IMR-90 (cell line): ENCODE measurements at regions of chr6 and their contacts with region 1.

Region 1: GRCh38 chr6:31597006-31597405 is 4.2 kb upstream of the NCR3 start:
- DNase-seq: peak; percentile 31
- ATAC-seq: peak; percentile 56; the same call in 1 of the 2 replicates
- H3K4me3 ChIP-seq: no peak overlapping the region
- H3K27ac ChIP-seq: no peak overlapping the region
- H3K4me1 ChIP-seq: no peaks in the 10 kb centered on the region
- H3K27me3 ChIP-seq: no peaks in the 10 kb centered on the region; the same call in 1 of the 2 replicates
- CTCF ChIP-seq: peak; percentile 37
- POLR2A ChIP-seq: no peak
- RAD21 ChIP-seq: peak; percentile 42

Region 2: GRCh38 chr6:31580807-31581433 is 16.1 kb before region 1 on chr6:
- CTCF ChIA-PET with region 1: interaction called, 6 read pairs
- POLR2A ChIA-PET with region 1: interaction called, 3 read pairs
- dilution Hi-C with region 1: no loop called
- in situ Hi-C with region 1: no loop called
- intact Hi-C with region 1: loop called (anchors 2 kb)
- DNase-seq: peak; percentile 71
- ATAC-seq: peak; percentile 99
- H3K4me3 ChIP-seq: peak overlapping the region; percentile 82
- H3K27ac ChIP-seq: peak overlapping the region; percentile 58; the same call in 1 of the 2 replicates
- H3K4me1 ChIP-seq: peaks cover 4% of the 10 kb centered on the region; the same call in 1 of the 2 replicates
- H3K27me3 ChIP-seq: peaks cover 12% of the 10 kb centered on the region
- CTCF ChIP-seq: peak; percentile 93
- POLR2A ChIP-seq: no peak
- RAD21 ChIP-seq: peak; percentile 60